ENCODE measurements at regions of chr11 and their contacts with region 1.

Region 1: DNA sequence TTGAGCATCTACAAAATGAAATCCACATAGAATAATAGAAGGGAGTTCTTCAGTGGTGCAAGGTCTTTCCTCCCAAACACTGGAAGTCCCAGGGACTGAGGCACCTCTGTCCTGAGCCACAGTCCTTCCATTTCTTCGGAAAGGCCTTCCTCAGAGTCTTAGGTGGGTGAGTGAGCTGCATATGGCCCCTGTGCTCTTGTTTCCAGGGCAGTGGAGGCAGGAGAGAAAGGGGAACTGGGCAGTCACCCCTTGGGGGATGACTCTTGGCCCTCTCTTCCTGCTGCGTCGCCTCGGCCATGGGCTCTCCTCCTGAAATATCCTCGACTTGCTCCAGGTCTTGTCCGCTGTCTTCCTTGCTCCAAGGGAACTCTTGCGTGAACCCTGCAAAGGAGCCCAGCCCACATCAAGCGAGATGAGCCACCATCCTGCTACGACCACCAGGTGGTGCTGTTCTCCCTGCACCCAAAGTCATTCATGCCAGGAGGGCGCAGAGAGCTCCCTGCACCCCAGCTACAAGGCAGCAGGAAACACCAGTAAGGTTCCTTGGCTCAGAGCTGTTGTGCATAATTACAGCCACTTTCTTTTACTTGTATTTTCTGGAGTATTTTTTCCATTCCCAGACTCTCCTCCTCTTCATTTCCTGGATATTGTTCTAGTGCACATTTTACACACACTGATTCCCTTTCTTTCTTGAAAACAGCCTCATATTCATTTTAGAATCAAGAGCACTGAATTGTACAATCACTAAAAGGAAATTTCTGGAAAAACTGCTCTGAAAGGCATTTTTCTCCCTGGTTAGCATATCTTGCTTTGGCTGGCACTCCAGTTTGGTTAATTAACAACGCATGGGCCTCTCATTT is 397.8 kb downstream of the OPCML start:
- DNase-seq: peak; percentile 71 to 74
- H3K4me3 ChIP-seq: no peak overlapping the region
- H3K4me3 Mint-ChIP-seq: no peak overlapping the region
- H3K27ac Mint-ChIP-seq: no peak overlapping the region
- H3K4me1 ChIP-seq: no peaks in the 10 kb centered on the region
- H3K4me1 Mint-ChIP-seq: no peaks in the 10 kb centered on the region
- H3K27me3 ChIP-seq: no peaks in the 10 kb centered on the region
- H3K27me3 Mint-ChIP-seq: no peaks in the 10 kb centered on the region
- CTCF ChIP-seq: peak; percentile 89 to 95

Region 2: GRCh38 chr11:132220474-132220873 is 914.1 kb before region 1 on chr11:
- CTCF ChIA-PET with region 1: no interaction called
- POLR2A ChIA-PET with region 1: no interaction called
- intact Hi-C with region 1: no loop called
- DNase-seq: no peak
- H3K4me3 ChIP-seq: no peak overlapping the region
- H3K4me3 Mint-ChIP-seq: no peak overlapping the region
- H3K27ac Mint-ChIP-seq: no peak overlapping the region
- H3K4me1 ChIP-seq: no peaks in the 10 kb centered on the region
- H3K4me1 Mint-ChIP-seq: no peaks in the 10 kb centered on the region
- H3K27me3 ChIP-seq: no peaks in the 10 kb centered on the region
- H3K27me3 Mint-ChIP-seq: peaks cover 3% of the 10 kb centered on the region
- CTCF ChIP-seq: no peak

Region 3: DNA sequence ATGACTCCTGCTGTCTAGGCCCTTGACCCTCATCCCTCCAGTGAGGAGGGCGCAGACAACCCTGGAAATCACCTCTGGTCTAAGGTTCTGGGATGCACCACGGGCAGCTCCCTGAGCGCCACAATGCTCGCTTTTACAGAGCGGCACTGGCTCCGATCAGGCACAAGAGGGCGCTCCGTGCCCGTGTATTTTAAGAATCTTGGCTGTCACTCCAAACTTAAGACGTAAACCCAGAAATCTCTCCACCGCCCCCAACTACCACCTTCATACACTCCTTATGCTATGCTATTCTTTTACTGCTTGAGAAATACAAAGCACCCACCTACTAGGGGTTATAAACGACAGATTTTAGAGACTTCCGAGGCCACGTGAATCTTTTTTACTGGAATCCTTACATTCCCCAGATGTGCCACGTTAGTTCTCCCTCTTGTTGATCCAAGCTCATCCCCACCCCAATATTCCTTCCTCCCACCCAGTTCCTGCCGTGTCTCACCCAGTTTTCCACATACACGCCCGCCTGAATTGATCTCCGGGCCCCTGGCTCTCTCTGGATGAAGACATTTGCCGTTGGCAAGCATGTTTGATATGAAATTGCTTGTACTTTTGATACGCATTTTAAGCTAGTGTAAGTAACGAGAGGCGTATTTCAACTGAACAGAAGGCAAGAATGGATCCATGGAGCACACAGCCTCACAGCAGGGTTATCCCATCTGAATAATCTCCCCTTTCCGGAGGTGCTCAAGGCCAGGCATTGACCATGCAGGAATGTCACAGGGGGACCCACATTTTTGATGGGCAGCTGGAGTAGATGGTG is 55.7 kb before region 1 on chr11:
- CTCF ChIA-PET with region 1: interaction called, 11 read pairs
- POLR2A ChIA-PET with region 1: no interaction called
- intact Hi-C with region 1: loop called (anchors 2 kb)
- DNase-seq: peak; percentile 60 to 75
- H3K4me3 ChIP-seq: no peak overlapping the region
- H3K4me3 Mint-ChIP-seq: no peak overlapping the region
- H3K27ac Mint-ChIP-seq: no peak overlapping the region
- H3K4me1 ChIP-seq: no peaks in the 10 kb centered on the region
- H3K4me1 Mint-ChIP-seq: no peaks in the 10 kb centered on the region
- H3K27me3 ChIP-seq: no peaks in the 10 kb centered on the region; the same call in 1 of the 2 replicates
- H3K27me3 Mint-ChIP-seq: peaks cover 13% of the 10 kb centered on the region
- CTCF ChIP-seq: peak; percentile 91 to 96

Region 4: GRCh38 chr11:133163463-133164419 is 29.2 kb after region 1 on chr11:
- CTCF ChIA-PET with region 1: interaction called, 12 read pairs
- POLR2A ChIA-PET with region 1: no interaction called
- intact Hi-C with region 1: loop called (anchors 1 kb)
- DNase-seq: peak in 1 of 2 experiments; percentile 69
- H3K4me3 ChIP-seq: no peak overlapping the region
- H3K4me3 Mint-ChIP-seq: no peak overlapping the region
- H3K27ac Mint-ChIP-seq: no peak overlapping the region
- H3K4me1 ChIP-seq: no peaks in the 10 kb centered on the region
- H3K4me1 Mint-ChIP-seq: peaks cover 12% of the 10 kb centered on the region
- H3K27me3 ChIP-seq: no peaks in the 10 kb centered on the region
- H3K27me3 Mint-ChIP-seq: peaks cover 9% of the 10 kb centered on the region
- CTCF ChIP-seq: peak; percentile 76 to 93

Region 5: GRCh38 chr11:133269267-133269666 is 134.7 kb after region 1 on chr11:
- CTCF ChIA-PET with region 1: no interaction called
- POLR2A ChIA-PET with region 1: no interaction called
- intact Hi-C with region 1: no loop called
- DNase-seq: no peak
- H3K4me3 ChIP-seq: no peak overlapping the region
- H3K4me3 Mint-ChIP-seq: no peak overlapping the region
- H3K27ac Mint-ChIP-seq: no peak overlapping the region
- H3K4me1 ChIP-seq: no peaks in the 10 kb centered on the region
- H3K4me1 Mint-ChIP-seq: no peaks in the 10 kb centered on the region
- H3K27me3 ChIP-seq: no peaks in the 10 kb centered on the region
- H3K27me3 Mint-ChIP-seq: peaks cover 9% of the 10 kb centered on the region
- CTCF ChIP-seq: no peak

Region 6: GRCh38 chr11:133311230-133311629 is 176.7 kb after region 1 on chr11:
- CTCF ChIA-PET with region 1: no interaction called
- POLR2A ChIA-PET with region 1: no interaction called
- intact Hi-C with region 1: loop called (anchors 5 kb)
- DNase-seq: no peak
- H3K4me3 ChIP-seq: no peak overlapping the region
- H3K4me3 Mint-ChIP-seq: no peak overlapping the region
- H3K27ac Mint-ChIP-seq: no peak overlapping the region
- H3K4me1 ChIP-seq: no peaks in the 10 kb centered on the region
- H3K4me1 Mint-ChIP-seq: no peaks in the 10 kb centered on the region
- H3K27me3 ChIP-seq: no peaks in the 10 kb centered on the region
- H3K27me3 Mint-ChIP-seq: peaks cover 15% of the 10 kb centered on the region
- CTCF ChIP-seq: no peak

Region 7: DNA sequence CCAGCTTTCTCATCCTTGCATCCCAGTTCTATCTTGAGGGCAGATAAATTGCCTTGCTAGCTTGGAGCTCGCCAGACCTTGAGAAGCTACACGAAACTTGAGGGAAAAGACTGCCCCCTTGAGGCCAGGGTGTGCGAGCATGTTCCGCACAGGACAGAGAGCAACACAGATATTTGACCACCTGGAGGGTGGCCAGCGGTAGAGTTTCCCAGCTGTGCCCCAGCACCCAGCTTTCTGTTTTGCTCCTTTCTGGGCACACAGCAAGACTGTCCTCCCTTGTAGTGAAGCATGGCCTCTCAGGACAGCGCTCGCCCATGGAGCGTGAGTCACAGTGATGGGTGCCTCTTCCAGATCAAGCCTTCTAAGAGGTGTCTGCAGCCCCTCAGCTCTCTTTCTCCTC is 687.2 kb after region 1 on chr11:
- CTCF ChIA-PET with region 1: interaction called, 11 read pairs
- POLR2A ChIA-PET with region 1: no interaction called
- intact Hi-C with region 1: no loop called
- DNase-seq: peak; percentile 63 to 72
- H3K4me3 ChIP-seq: no peak overlapping the region
- H3K4me3 Mint-ChIP-seq: no peak overlapping the region
- H3K27ac Mint-ChIP-seq: no peak overlapping the region
- H3K4me1 ChIP-seq: no peaks in the 10 kb centered on the region
- H3K4me1 Mint-ChIP-seq: no peaks in the 10 kb centered on the region
- H3K27me3 ChIP-seq: no peaks in the 10 kb centered on the region
- H3K27me3 Mint-ChIP-seq: peaks cover 17% of the 10 kb centered on the region
- CTCF ChIP-seq: peak; percentile 72 to 80

Measured in Caco-2 (cell line).